ENCODE measurements at regions of chr2 and their contacts with region 1.

Region 1: GRCh38 chr2:88810017-88810416 is 118.5 kb downstream of the RPIA start:
- DNase-seq: no peak
- H3K4me3 ChIP-seq: no peak overlapping the region
- H3K27ac ChIP-seq: no peak overlapping the region
- H3K4me1 ChIP-seq: peaks cover 3% of the 10 kb centered on the region
- H3K27me3 ChIP-seq: peaks cover 0 to 9% of the 10 kb centered on the region in 2 experiments
- CTCF ChIP-seq: no peak
- POLR2A ChIP-seq: no peak

Region 2: GRCh38 chr2:88857951-88858411 is 48.0 kb after region 1 on chr2:
- CTCF ChIA-PET with region 1: interaction called, 10 read pairs
- POLR2A ChIA-PET with region 1: no interaction called
- dilution Hi-C with region 1: no loop called
- intact Hi-C with region 1: no loop called
- DNase-seq: peak; percentile 83
- H3K4me3 ChIP-seq: no peak overlapping the region
- H3K27ac ChIP-seq: no peak overlapping the region
- H3K4me1 ChIP-seq: peaks cover 6% of the 10 kb centered on the region
- H3K27me3 ChIP-seq: peaks cover 1 to 10% of the 10 kb centered on the region in 2 experiments
- CTCF ChIP-seq: no peak
- POLR2A ChIP-seq: no peak

Region 3: GRCh38 chr2:88874063-88874657 is 64.1 kb after region 1 on chr2:
- CTCF ChIA-PET with region 1: interaction called, 12 read pairs
- POLR2A ChIA-PET with region 1: no interaction called
- dilution Hi-C with region 1: no loop called
- intact Hi-C with region 1: loop called (anchors 1 kb)
- DNase-seq: peak; percentile 77
- H3K4me3 ChIP-seq: peak overlapping the region in 1 of 3 experiments; percentile 45
- H3K27ac ChIP-seq: no peak overlapping the region
- H3K4me1 ChIP-seq: no peaks in the 10 kb centered on the region
- H3K27me3 ChIP-seq: peaks cover 10 to 32% of the 10 kb centered on the region in 2 experiments
- CTCF ChIP-seq: peak; percentile 57 to 62
- POLR2A ChIP-seq: no peak

Region 4: DNA sequence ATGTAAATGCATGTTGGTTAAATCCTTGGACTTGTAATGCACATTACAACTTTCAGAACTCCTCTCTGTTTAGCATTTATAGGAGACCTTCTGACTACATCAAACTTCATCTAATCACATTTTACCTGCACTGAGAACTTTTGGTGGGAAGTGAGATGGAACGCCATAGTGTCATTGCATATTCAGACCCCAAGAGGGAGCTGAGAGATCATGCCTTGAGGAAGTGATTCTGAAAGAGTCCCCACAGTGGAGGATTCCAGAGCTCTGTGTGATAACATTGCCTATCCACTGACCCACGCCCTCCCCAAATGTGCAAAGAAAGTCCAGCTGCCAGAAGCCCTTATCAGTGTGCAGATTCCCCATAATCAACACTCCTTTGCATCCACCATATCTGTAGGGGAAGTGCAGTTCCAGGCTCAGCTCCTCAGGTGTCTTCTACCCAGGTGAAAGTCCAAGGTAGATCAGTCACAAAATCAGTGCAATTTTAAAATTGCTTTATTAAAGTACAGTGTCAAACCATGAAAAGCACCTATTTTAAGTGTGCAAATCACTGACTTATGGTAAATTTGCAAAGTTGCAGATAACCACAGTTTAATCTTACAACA is 93.8 kb after region 1 on chr2:
- CTCF ChIA-PET with region 1: interaction called, 13 read pairs
- POLR2A ChIA-PET with region 1: no interaction called
- dilution Hi-C with region 1: no loop called
- intact Hi-C with region 1: no loop called
- DNase-seq: peak; percentile 32
- H3K4me3 ChIP-seq: no peak overlapping the region
- H3K27ac ChIP-seq: no peak overlapping the region
- H3K4me1 ChIP-seq: no peaks in the 10 kb centered on the region
- H3K27me3 ChIP-seq: peaks cover 2 to 11% of the 10 kb centered on the region in 2 experiments
- CTCF ChIP-seq: peak; percentile 49 to 63
- POLR2A ChIP-seq: no peak

Region 5: GRCh38 chr2:88919087-88919738 is 109.2 kb after region 1 on chr2:
- CTCF ChIA-PET with region 1: interaction called, 30 read pairs
- POLR2A ChIA-PET with region 1: no interaction called
- dilution Hi-C with region 1: no loop called
- intact Hi-C with region 1: loop called (anchors 1 kb)
- DNase-seq: peak; percentile 29
- H3K4me3 ChIP-seq: no peak overlapping the region
- H3K27ac ChIP-seq: no peak overlapping the region
- H3K4me1 ChIP-seq: no peaks in the 10 kb centered on the region
- H3K27me3 ChIP-seq: peaks cover 5 to 13% of the 10 kb centered on the region in 2 experiments
- CTCF ChIP-seq: peak; percentile 46 to 49
- POLR2A ChIP-seq: no peak

Region 6: GRCh38 chr2:88950010-88950409 is 140.0 kb after region 1 on chr2:
- CTCF ChIA-PET with region 1: interaction called, 3 read pairs
- POLR2A ChIA-PET with region 1: no interaction called
- dilution Hi-C with region 1: no loop called
- intact Hi-C with region 1: loop called (anchors 1 kb)
- DNase-seq: peak; percentile 24
- H3K4me3 ChIP-seq: no peak overlapping the region
- H3K27ac ChIP-seq: no peak overlapping the region
- H3K4me1 ChIP-seq: no peaks in the 10 kb centered on the region
- H3K27me3 ChIP-seq: peaks cover 0 to 2% of the 10 kb centered on the region in 2 experiments
- CTCF ChIP-seq: peak; percentile 29 to 50
- POLR2A ChIP-seq: no peak

Measured in endothelial cell of umbilical vein (primary cell).